ENCODE measurements at regions of chr2 and their contacts with region 1.

Region 1: GRCh38 chr2:237590272-237591140 is at the start of gene RAB17:
- DNase-seq: peak; percentile 7
- H3K4me3 ChIP-seq: no peak within 1 kb of the TSS
- CTCF ChIP-seq: no peak

Region 2: DNA sequence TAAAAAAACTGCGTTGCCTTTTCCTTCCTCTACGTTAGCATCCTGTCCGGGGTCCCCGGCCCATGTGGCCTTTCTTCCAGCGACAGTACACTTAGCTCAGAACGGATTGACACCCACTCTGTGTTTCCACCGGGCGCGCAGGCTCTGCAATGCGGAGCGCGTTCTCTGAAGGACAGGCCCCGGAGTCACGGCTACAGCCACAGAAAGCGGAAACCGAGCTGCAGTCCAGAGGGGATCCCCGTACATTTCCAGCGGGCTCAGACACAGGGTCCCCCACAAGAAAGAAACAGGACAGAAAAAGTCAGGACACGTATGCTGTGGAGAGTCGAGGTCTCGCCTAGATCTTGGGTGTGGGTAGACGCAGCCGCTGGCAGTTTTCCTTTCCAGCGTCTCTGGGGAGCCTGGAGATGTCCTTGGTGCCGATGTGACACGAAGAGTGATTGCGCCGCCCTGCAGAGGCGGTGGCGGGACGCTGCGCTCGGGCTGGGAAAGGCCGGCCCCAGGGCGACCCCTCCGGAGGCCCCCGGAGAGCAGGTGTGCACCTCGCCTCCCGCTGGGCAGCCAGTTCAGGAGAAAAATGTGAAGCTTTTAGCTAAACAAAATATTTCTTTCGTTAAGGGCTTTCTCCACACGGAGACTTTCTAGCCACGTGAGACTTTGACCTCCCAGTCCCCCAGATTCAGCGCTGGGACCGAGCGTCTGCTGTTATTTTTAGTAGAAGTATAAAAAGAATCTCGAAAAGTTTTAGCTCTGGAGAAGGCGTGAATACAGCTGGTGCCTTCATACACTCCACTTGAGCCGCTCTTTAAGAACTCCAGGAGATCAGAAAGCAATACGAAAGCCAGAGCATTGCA is 1022.2 kb before region 1 on chr2:
- CTCF ChIA-PET with region 1: no interaction called
- POLR2A ChIA-PET with region 1: no interaction called
- DNase-seq: no peak
- H3K4me3 ChIP-seq: peak overlapping the region; percentile 30
- CTCF ChIP-seq: no peak

Region 3: GRCh38 chr2:237603718-237604362 is 13.3 kb after region 1 on chr2:
- CTCF ChIA-PET with region 1: interaction called, 10 read pairs
- POLR2A ChIA-PET with region 1: no interaction called
- DNase-seq: no peak
- H3K4me3 ChIP-seq: no peak overlapping the region
- CTCF ChIP-seq: no peak

Region 4: GRCh38 chr2:238883421-238883901 is 1293.0 kb after region 1 on chr2:
- CTCF ChIA-PET with region 1: no interaction called
- POLR2A ChIA-PET with region 1: no interaction called
- DNase-seq: peak; percentile 70
- H3K4me3 ChIP-seq: no peak overlapping the region
- CTCF ChIP-seq: no peak

Measured in AG04449 (cell line).